ENCODE measurements at regions of chr11 and their contacts with region 1.

Region 1: DNA sequence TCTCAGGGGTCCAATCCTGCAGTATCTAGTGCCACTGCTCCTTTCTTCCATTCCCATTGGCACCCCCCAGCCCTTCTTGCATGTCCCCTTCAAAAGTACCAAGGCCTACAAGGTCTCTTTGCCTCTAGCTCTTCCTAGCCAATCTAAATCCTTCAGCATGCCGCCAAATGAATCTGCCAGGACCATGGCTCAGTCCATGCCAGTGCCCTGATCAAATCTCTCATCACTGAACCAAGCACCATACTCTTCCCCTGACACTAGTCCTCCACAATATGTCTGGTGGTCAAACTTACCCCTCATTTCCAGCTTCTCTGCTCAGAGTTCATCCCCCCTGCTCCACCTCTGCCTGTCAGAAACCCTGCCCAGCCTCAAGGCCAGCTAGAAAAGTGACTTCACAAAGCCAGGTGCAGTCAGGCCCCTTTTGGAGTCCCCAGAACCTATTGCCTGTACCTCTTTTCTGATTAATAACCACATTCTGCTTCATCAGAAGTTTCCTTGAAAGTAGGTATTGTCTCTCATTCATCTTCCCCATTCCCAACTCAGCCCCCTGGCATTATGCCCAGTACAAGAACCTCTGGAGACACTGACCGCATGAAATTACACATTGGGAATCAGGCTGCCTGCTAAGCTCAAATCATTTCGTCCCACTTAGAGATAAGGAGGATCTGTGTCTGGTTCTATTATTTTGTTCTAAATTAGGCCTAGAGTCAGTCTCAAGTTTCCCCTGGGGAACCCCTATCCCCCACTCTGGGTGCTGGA is 11.4 kb downstream of the FEN1 start:
- DNase-seq: no peak
- H3K4me3 ChIP-seq: no peak overlapping the region
- H3K4me3 Mint-ChIP-seq: no peak overlapping the region
- H3K27ac ChIP-seq: no peak overlapping the region
- H3K27ac Mint-ChIP-seq: no peak overlapping the region
- H3K4me1 ChIP-seq: peaks cover 4% of the 10 kb centered on the region in 2 donors
- H3K4me1 Mint-ChIP-seq: peaks cover 13% of the 10 kb centered on the region
- H3K27me3 ChIP-seq: no peaks in the 10 kb centered on the region
- H3K27me3 Mint-ChIP-seq: no peaks in the 10 kb centered on the region
- CTCF ChIP-seq: no peak

Region 2: DNA sequence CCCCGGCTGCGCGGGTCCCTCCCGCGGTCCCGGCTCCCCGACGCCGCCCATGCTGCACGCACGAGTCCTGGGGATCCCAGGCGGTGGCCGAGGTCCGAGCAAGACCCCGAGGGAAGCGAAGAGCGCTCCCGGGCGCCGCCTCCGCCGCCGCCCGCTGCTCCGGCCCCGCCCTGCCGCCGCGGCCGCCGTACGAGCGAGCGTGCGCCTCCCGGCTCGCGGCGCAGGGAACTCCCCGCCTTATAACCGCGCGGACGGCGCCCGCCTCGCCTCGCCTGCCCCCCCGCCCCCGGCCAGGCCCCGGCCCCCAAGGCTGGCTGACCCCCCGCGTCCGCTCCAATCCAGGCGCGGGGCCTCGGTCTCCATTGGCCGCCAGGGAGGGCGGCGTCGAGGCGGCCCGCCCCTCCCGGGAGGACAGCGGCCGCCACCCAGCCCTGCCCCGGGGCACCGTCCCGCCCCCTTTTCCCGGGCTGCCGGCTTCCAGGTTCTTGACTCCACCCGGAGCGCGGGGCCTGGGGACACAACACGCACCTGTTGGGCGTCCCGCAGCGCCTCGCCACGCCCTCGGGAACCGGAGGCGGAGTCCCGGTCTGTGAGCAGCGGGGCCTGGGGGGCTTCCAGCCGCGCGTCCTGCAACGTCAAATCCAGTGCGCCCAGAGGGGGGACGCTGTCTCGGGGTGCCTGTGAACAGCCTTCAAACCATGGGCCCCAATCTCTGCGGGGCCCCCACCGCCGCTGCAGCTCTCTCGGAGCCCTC is 87.4 kb after region 1 on chr11 and contains the start of gene FADS3:
- intact Hi-C with region 1: loop called (anchors 5 to 10 kb)
- DNase-seq: peak; percentile 44 to 49 (median 45)
- H3K4me3 ChIP-seq: peak within 1 kb of the TSS; percentile 58 to 79 (median 60)
- H3K4me3 Mint-ChIP-seq: peak within 1 kb of the TSS; percentile 79 to 88
- H3K27ac ChIP-seq: peak within 1 kb of the TSS in 1 of 2 donors; percentile 23
- H3K27ac Mint-ChIP-seq: peak within 1 kb of the TSS in 6 of 7 donors; percentile 21 to 86 (median 72)
- H3K4me1 ChIP-seq: peaks cover 12 to 28% of the 10 kb centered on the region in 2 donors
- H3K4me1 Mint-ChIP-seq: peaks cover 23% of the 10 kb centered on the region
- H3K27me3 ChIP-seq: peaks cover 0 to 19% of the 10 kb centered on the region in 2 donors
- H3K27me3 Mint-ChIP-seq: peaks cover 9 to 18% (median 17%) of the 10 kb centered on the region in 3 donors
- CTCF ChIP-seq: no peak
- polyA plus RNA-seq, gene FADS3: 2.5 to 6.8 (median 5.8) TPM

Region 3: DNA sequence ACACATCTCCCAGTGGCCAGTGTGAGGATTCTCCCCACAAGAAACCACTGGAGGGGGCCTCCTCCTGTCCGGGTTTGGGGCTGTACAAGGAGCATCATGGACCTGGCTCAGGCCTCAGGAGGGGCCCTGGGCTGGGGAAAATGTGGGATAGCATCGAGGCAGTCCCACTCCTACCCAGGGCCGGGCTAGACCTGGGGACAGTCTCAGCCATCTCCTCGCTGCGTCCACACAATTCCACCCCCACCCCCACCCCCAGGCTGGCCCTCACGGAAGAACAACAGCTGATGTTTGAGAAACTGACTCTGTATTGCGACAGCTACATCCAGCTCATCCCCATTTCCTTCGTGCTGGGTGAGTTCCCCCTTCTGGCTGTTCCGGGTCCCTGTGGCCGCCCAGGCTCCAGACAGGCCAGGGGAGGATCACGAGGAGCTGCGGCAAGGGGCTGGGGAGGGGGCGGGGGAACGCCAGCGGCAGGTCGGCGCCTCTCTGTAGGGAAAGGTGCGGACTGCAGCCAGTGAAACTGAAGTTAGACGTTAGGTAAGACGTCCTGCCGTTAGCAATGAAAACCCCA is 150.9 kb after region 1 on chr11:
- intact Hi-C with region 1: loop called in 1 of 2 experiments (anchors 5 kb)
- DNase-seq: peak; percentile 94 to 98 (median 97)
- H3K4me3 ChIP-seq: peak overlapping the region; percentile 48 to 77 (median 70)
- H3K4me3 Mint-ChIP-seq: peak overlapping the region; percentile 82 to 85
- H3K27ac ChIP-seq: peak overlapping the region; percentile 91 to 95
- H3K27ac Mint-ChIP-seq: peak overlapping the region; percentile 91 to 98 (median 96)
- H3K4me1 ChIP-seq: peaks cover 40 to 53% of the 10 kb centered on the region in 2 donors
- H3K4me1 Mint-ChIP-seq: peaks cover 42% of the 10 kb centered on the region
- H3K27me3 ChIP-seq: no peaks in the 10 kb centered on the region
- H3K27me3 Mint-ChIP-seq: peaks cover 0 to 3% (median 1%) of the 10 kb centered on the region in 3 donors
- CTCF ChIP-seq: peak; percentile 26

Region 4: GRCh38 chr11:62108017-62108750 is 304.1 kb after region 1 on chr11:
- intact Hi-C with region 1: loop called (anchors 2 to 5 kb)
- DNase-seq: peak; percentile 48 to 73 (median 66)
- H3K4me3 ChIP-seq: no peak overlapping the region
- H3K4me3 Mint-ChIP-seq: no peak overlapping the region
- H3K27ac ChIP-seq: no peak overlapping the region
- H3K27ac Mint-ChIP-seq: no peak overlapping the region
- H3K4me1 ChIP-seq: peaks cover 18 to 19% of the 10 kb centered on the region in 2 donors
- H3K4me1 Mint-ChIP-seq: peaks cover 14% of the 10 kb centered on the region
- H3K27me3 ChIP-seq: no peaks in the 10 kb centered on the region
- H3K27me3 Mint-ChIP-seq: peaks cover 2 to 10% (median 8%) of the 10 kb centered on the region in 3 donors
- CTCF ChIP-seq: peak; percentile 76

Region 5: DNA sequence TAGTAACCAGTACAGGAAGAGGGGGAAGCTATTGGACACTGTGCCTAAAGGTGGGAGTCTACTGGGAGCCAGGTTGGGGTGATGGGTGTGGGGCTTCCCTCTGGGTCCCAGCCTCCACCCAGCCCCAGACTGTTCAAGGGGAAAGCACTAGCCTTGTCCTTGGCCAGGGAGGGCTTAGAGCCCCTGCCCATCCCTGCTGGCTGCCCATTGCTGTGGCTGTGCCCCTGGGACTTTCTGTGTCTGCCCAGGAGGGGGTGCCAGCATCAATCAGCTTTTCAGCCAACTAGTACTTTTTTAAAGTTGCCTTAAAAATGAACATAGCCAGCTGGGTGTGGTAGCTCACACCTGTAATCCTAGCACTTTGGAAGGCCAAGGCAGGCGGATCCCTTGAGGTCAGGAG is 339.7 kb after region 1 on chr11:
- intact Hi-C with region 1: no loop called
- DNase-seq: no peak
- H3K4me3 ChIP-seq: no peak overlapping the region
- H3K4me3 Mint-ChIP-seq: no peak overlapping the region
- H3K27ac ChIP-seq: no peak overlapping the region
- H3K27ac Mint-ChIP-seq: no peak overlapping the region
- H3K4me1 ChIP-seq: no peaks in the 10 kb centered on the region
- H3K4me1 Mint-ChIP-seq: no peaks in the 10 kb centered on the region
- H3K27me3 ChIP-seq: no peaks in the 10 kb centered on the region
- H3K27me3 Mint-ChIP-seq: no peaks in the 10 kb centered on the region
- CTCF ChIP-seq: no peak

Measured in CD14-positive monocyte (primary cell).